Mucosa of descending colon (tissue), 3 donors: ENCODE measurements at regions of chr10 and their contacts with region 1.

Region 1: GRCh38 chr10:22997102-22997501 is 69.2 kb downstream of the ARMC3 start:
- DNase-seq: no peak
- ATAC-seq: no peak
- H3K4me3 ChIP-seq: no peak overlapping the region
- H3K4me1 ChIP-seq: no peaks in the 10 kb centered on the region
- CTCF ChIP-seq: no peak

Region 2: DNA sequence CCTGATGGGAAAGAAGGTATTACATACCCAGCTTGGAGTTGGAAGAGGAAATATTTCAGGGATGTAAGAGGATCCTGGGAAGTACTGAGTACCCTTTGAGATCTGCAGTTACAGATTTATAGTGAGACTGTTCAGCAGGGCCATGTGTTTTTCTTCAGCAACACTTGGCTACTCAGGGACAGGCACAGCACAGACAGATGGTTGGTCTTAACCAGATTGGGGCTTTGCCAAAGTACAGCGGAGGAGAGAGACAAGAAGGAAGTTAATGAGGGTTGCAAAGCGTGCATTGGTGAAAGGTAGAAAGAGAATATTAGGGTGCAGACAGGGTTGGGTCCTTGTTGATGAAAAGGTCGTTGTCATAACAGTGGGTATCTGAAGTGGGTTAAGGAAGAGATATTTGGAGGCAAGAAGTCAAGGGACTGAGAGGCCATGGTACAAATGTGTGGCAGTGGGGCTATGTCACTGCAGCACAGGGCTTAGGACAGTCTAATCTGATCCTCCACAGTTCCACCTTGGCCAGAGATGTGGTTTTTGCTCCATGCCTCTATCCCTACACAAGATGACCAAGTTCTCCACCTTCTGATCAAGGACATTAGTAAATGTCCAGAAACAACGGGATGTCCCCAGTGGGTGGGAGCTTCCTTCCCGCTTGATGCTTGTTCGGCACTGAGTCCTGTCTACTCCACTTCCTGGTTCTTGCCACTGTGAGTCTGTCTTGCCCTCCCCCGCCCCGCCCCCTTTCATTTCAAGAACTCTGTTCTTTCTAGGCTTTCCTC is 974.7 kb before region 1 on chr10:
- intact Hi-C with region 1: loop called in 1 of 2 experiments (anchors 10 kb)
- DNase-seq: peak in 2 of 3 donors; percentile 24 to 28
- ATAC-seq: peak; percentile 67
- H3K4me3 ChIP-seq: no peak overlapping the region
- H3K4me1 ChIP-seq: no peaks in the 10 kb centered on the region
- CTCF ChIP-seq: no peak

Region 3: GRCh38 chr10:22573820-22574569 is 423.1 kb before region 1 on chr10:
- intact Hi-C with region 1: loop called in 1 of 2 experiments (anchors 10 kb)
- DNase-seq: peak in 1 of 3 donors; percentile 31
- ATAC-seq: no peak
- H3K4me3 ChIP-seq: no peak overlapping the region
- H3K4me1 ChIP-seq: no peaks in the 10 kb centered on the region
- CTCF ChIP-seq: no peak

Region 4: DNA sequence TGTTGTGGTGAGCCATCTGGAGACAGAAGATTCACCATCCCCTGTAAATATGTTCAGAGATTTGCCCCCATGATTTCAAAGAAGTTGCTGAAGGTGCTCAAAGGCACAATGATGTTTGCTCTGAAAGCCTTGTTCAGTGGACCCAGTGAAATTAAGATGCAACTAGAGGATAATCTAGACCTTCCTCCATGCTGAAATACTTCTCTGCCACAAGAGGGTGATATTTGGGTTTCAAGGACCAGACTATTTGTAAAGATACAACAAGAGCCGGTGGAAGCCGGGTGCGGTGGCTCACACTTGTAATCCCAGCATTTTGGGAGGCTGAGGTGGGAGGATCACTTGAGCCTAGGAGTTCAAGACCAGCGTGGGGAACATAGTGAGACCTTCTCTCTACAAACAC is 84.8 kb after region 1 on chr10:
- intact Hi-C with region 1: no loop called
- DNase-seq: no peak
- ATAC-seq: peak; percentile 44
- H3K4me3 ChIP-seq: no peak overlapping the region
- H3K4me1 ChIP-seq: no peaks in the 10 kb centered on the region
- CTCF ChIP-seq: no peak